ENCODE measurements at regions of chr5 and their contacts with region 1.

Region 1: GRCh38 chr5:138895918-138896317 is 20.8 kb upstream of the LRRTM2 start:
- DNase-seq: no peak
- ATAC-seq: no peak

Region 2: DNA sequence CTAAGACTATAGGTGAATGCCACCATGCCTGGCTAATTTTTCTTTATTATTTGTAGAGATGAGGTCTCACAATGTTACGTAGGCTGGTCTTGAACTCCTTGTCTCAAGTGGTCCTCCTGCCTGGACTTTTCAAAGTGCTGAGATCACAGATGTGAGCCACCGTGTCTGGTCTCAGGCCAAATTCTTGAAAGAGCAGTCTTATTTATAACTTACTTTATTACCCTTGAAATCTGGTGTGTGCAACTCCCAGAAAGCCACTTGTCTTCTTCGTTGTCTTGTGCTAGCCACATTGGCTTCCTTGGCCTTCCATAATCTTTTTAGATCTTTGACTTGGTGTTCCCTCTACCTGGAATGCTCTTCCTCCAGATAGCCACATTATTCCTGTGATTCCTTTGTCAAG is 92.6 kb before region 1 on chr5:
- intact Hi-C with region 1: no loop called
- DNase-seq: no peak
- ATAC-seq: no peak

Region 3: DNA sequence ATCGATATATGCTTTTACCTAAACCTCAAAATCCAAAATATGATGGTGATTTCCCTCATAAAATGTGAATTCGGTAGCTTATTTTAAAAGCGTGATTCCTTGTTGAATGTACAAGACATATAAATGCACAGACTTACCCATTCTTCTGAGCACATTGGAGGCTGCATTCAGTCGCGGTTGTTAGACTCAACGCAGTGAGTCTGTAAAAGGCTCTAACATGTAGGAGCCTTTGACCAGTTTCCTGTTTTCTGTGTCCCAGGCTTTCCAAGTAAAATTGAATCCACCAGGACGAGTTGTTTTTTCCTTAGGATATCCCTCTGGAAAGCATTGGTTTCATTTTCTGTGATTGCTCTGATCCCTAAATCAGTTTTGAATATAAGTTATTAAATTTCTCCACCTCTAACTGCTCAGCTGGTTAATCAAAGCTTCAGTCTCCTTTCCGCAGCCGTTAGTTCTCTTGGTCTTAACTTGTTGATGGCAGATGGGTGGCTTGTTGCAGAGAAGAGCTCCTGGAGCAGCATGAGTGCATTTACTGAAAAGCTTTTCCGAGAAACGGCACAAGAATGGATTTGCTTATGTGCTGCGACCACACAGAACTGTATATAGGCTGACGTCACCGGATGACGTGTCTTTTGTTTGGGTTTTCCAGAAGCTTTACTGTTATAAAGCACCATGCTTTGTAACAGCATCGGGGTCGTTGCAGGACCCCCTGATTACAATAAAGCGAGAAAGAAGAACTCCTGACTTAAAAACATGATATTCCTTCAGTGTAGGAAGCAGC is 21.0 kb before region 1 on chr5 and contains the start of gene LRRTM2:
- intact Hi-C with region 1: loop called in 1 of 2 experiments (anchors 2 kb)
- DNase-seq: no peak
- ATAC-seq: no peak
- total RNA-seq, gene LRRTM2: 0.12 TPM in 1 of 2 donors, not detected in the other

Region 4: DNA sequence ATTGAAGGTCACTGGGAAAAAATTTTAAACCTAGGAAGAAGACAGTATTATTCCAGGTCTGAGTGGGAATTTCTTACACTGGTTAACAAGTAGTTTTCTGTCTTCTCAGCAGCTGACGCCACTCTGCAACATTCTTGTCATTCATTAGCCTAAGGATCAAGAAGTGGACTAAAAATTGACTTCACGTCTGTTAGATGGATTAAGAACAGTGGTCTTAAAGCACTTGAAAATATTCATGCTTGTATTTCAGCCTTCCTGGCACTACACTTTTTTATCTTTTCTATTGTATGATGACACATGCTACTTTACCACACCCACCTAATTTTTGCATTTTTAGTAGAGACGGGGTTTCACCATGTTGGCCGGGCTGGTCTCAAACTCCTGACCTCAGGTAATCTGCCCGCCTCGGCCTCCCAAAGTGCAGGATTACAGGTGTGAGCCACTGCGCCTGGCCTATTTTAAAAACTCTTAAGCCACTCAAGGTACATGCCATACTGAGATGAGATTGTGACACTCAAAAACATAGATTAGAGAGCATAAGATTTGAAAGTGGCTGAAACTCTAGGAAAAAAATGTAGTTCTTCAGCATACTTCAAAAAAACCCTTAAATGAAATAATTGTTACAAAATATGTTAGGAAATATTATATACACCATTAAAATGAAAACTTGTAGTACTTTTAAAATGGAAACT is 406.0 kb after region 1 on chr5:
- intact Hi-C with region 1: no loop called
- DNase-seq: no peak
- ATAC-seq: no peak

Measured in left cardiac atrium (tissue), 4 donors.